Heart right ventricle (tissue), 16 donors: ENCODE measurements at regions of chr17 and their contacts with region 1.

Region 1: GRCh38 chr17:4010754-4011153 is 46.5 kb upstream of the ATP2A3 start:
- DNase-seq: no peak
- ATAC-seq: no peak
- H3K4me3 ChIP-seq: no peak overlapping the region
- H3K27ac ChIP-seq: no peak overlapping the region
- H3K4me1 ChIP-seq: peaks cover 0 to 5% (median 0%) of the 10 kb centered on the region in 9 donors
- H3K27me3 ChIP-seq: no peaks in the 10 kb centered on the region
- CTCF ChIP-seq: no peak

Region 2: GRCh38 chr17:3955367-3955988 is 55.3 kb before region 1 on chr17:
- intact Hi-C with region 1: loop called in 1 of 10 experiments (anchors 2 kb)
- DNase-seq: no peak
- ATAC-seq: peak in 3 of 8 donors; percentile 35 to 66 (median 54)
- H3K4me3 ChIP-seq: no peak overlapping the region
- H3K27ac ChIP-seq: peak overlapping the region in 7 of 10 donors; percentile 5 to 67 (median 55)
- H3K4me1 ChIP-seq: peaks cover 6 to 25% (median 16%) of the 10 kb centered on the region in 9 donors
- H3K27me3 ChIP-seq: no peaks in the 10 kb centered on the region
- CTCF ChIP-seq: no peak

Region 3: DNA sequence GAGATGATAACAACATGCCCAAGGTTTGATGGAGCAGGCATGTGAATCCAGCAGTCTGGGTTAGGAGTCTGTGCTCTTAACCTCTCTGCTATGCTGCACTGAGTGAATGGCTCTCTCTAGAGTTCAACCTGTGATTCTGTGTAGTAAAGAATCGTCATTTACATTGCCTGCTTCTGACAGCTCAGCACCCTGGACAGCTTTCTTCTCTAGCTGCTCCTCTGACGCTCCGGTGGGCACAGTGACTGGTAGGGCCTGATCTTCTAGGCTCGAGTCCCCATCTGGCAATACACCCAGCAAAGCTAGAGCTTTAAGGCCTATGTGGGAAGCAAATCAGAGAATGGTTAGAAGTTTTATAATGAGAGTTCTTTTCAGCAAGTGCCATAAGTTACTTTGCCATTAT is 38.8 kb after region 1 on chr17:
- intact Hi-C with region 1: loop called in 1 of 10 experiments (anchors 2 kb)
- DNase-seq: no peak
- ATAC-seq: no peak
- H3K4me3 ChIP-seq: no peak overlapping the region
- H3K27ac ChIP-seq: no peak overlapping the region
- H3K4me1 ChIP-seq: no peaks in the 10 kb centered on the region
- H3K27me3 ChIP-seq: no peaks in the 10 kb centered on the region
- CTCF ChIP-seq: no peak

Region 4: GRCh38 chr17:4059653-4060052 is 48.9 kb after region 1 on chr17:
- intact Hi-C with region 1: no loop called
- DNase-seq: no peak
- ATAC-seq: peak in 1 of 8 donors; percentile 29
- H3K4me3 ChIP-seq: no peak overlapping the region
- H3K27ac ChIP-seq: no peak overlapping the region
- H3K4me1 ChIP-seq: peaks cover 0 to 6% (median 0%) of the 10 kb centered on the region in 9 donors
- H3K27me3 ChIP-seq: no peaks in the 10 kb centered on the region
- CTCF ChIP-seq: no peak

Region 5: GRCh38 chr17:4074831-4075495 is 64.2 kb after region 1 on chr17:
- intact Hi-C with region 1: no loop called
- DNase-seq: no peak
- ATAC-seq: peak; percentile 25 to 70 (median 56)
- H3K4me3 ChIP-seq: no peak overlapping the region
- H3K27ac ChIP-seq: peak overlapping the region in 2 of 10 donors; percentile 3 to 7
- H3K4me1 ChIP-seq: peaks cover 0 to 22% (median 4%) of the 10 kb centered on the region in 9 donors
- H3K27me3 ChIP-seq: no peaks in the 10 kb centered on the region
- CTCF ChIP-seq: peak; percentile 30 to 73 (median 61)

Region 6: DNA sequence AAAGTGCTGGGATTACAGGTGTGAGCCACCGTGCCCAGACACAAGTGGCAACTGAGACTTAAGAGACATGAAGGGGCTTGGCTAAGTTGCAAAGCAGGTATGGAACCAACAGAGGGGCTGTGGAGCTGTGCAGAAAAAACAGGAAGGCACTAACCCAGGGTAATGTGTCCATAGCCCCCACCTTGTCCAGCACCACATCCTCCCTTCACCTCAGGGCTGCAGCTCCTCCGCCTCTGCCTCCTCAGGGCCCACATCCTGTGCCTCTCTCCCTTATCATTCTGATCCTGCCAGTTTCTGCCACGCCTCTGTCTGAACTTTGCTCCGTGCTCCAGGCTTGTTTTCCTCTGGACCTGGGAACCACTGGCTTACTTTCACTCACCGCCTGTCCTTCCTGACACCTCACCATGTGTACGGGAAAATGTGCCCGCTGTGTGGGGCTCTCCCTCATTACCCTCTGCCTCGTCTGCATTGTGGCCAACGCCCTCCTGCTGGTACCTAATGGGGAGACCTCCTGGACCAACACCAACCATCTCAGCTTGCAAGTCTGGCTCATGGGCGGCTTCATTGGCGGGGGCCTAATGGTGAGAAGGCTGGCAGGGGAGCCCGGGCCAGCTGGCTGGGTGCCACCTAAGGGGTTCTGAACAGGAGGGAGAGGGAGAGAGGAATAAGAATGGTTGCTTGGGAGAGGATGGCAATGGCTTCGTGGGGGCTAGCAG is 760.9 kb after region 1 on chr17 and contains the start of gene TM4SF5:
- intact Hi-C with region 1: no loop called
- DNase-seq: no peak
- ATAC-seq: peak in 1 of 8 donors; percentile 22
- H3K4me3 ChIP-seq: no peak within 1 kb of the TSS
- H3K27ac ChIP-seq: peak within 1 kb of the TSS in 1 of 10 donors; percentile 69
- H3K4me1 ChIP-seq: peaks cover 0 to 21% (median 0%) of the 10 kb centered on the region in 9 donors
- H3K27me3 ChIP-seq: peaks cover 0 to 22% (median 8%) of the 10 kb centered on the region in 7 donors
- CTCF ChIP-seq: no peak
- total RNA-seq, gene TM4SF5: not detected